ENCODE measurements at regions of chr15 and their contacts with region 1.

Region 1: DNA sequence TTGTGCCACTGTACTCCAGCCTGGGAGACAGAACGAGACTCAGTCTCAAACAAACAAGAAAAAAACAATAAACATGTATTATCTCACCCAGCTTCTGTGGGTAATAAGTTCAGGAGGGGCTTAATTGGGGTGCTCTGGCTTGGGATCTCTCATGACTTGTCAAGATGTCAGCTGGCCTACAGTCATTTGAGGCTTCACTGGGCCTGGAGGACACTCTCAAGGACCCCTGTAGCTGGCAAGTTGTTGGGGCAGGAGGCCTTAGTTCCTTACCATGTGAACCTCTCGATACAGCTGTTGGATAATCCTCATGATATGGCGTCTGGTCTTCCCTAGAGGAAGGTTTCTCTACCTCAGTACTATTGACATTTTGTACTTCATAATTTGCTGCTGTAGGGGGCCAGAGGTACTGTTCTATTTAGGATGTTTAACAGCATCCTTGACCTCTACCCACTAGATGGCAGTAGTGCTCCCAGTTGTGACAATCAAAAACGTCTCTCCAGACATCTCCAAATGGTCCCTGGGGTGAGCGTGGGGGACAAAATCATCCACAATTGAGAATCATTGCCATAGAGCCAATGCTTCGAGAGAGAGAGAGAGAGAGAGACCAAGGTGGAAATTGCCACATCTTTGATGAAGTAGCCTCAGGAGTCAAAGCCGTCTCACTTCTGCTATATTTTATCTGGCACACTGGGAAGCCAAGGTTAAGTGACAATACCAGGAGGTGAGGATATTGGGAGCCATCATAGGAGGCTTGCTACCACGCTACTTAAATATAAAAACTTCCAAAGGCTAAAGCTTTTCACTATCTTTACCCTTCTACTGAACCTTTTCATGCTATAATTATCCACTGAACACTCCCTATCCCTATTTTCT is 23.9 kb upstream of the SLTM start:
- DNase-seq: no peak
- H3K4me3 ChIP-seq: no peak overlapping the region
- CTCF ChIP-seq: peak; percentile 74

Region 2: DNA sequence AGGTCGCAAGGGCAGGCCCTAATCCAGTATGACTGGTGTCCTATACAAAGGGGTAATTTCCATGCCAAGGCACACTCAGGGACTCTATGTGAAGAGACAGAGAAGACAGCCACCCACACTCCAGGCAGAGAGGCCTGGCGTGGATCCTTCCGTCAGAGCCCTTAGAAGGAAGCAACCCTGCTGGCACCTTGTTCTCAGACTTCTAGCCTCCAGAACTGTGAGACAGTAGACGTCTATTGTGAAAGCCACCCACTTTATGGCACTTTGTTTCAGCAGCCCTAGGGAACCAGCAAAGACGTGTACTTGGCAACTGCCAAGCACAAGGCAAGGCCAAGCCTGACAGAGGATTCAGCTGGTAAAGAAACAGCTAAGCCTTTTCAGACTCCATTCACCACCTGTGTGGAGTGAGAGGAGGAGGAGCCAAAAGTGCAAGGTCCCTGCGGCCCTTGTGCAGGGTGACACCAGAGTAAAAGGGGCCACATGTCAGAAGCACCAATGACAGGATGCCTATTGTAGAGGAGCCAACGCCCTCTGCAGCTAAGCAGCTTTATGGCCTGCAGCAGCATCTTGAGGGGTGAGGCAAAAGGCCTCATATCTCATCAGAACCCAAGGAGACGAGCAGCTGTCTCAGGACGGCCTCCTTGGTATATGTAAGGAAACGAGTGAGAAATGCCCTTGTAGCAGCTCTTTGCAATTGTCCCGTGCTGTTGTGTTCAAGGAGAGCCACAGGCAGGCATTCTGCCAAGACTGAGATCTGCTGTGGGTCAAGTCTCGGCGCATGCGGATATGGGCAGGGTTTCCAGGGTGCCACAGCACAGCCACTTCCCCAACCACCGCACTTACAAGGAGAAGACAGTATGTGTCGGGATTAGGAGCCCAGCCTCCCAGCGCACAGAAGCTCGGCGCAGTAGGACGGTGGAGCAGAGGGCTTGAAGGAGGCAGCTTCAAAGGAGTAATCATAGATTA is 647.1 kb before region 1 on chr15:
- CTCF ChIA-PET with region 1: no interaction called
- POLR2A ChIA-PET with region 1: no interaction called
- DNase-seq: no peak
- H3K4me3 ChIP-seq: no peak overlapping the region
- CTCF ChIP-seq: no peak

Region 3: GRCh38 chr15:58947179-58947578 is 10.2 kb before region 1 on chr15:
- CTCF ChIA-PET with region 1: interaction called, 16 read pairs
- POLR2A ChIA-PET with region 1: interaction called, 4 read pairs
- DNase-seq: no peak
- H3K4me3 ChIP-seq: no peak overlapping the region
- CTCF ChIP-seq: no peak

Region 4: GRCh38 chr15:58980351-58980939 is 23.1 kb after region 1 on chr15:
- CTCF ChIA-PET with region 1: interaction called, 13 read pairs
- POLR2A ChIA-PET with region 1: no interaction called
- DNase-seq: no peak
- H3K4me3 ChIP-seq: no peak overlapping the region
- CTCF ChIP-seq: peak; percentile 21

Measured in AG04449 (cell line).